Sigmoid colon (tissue), 7 donors: ENCODE measurements at regions of chr5 and their contacts with region 1.

Region 1: GRCh38 chr5:179907570-179908324 is at the start of gene TBC1D9B:
- DNase-seq: peak; percentile 88
- H3K4me3 ChIP-seq: peak within 1 kb of the TSS; percentile 52 to 72 (median 66)
- H3K27ac ChIP-seq: peak within 1 kb of the TSS; percentile 78 to 85 (median 80)
- H3K4me1 ChIP-seq: peaks cover 0 to 21% (median 19%) of the 10 kb centered on the region in 4 donors
- H3K27me3 ChIP-seq: no peaks in the 10 kb centered on the region
- CTCF ChIP-seq: no peak
- EP300 ChIP-seq: no peak
- POLR2A ChIP-seq: no peak
- total RNA-seq, gene TBC1D9B: 291 to 1,545 (median 1,005) TPM

Region 2: GRCh38 chr5:179763215-179763945 is 144.4 kb before region 1 on chr5:
- intact Hi-C with region 1: loop called (anchors 5 kb)
- DNase-seq: peak; percentile 82
- H3K4me3 ChIP-seq: no peak overlapping the region
- H3K27ac ChIP-seq: peak overlapping the region; percentile 52 to 78 (median 61)
- H3K4me1 ChIP-seq: peaks cover 0 to 82% (median 68%) of the 10 kb centered on the region in 4 donors
- H3K27me3 ChIP-seq: no peaks in the 10 kb centered on the region
- CTCF ChIP-seq: peak; percentile 69 to 86 (median 80)
- EP300 ChIP-seq: no peak
- POLR2A ChIP-seq: no peak

Region 3: GRCh38 chr5:179806250-179807222 is 101.2 kb before region 1 on chr5 and contains the start of gene MGAT4B:
- intact Hi-C with region 1: loop called (anchors 5 kb)
- DNase-seq: peak; percentile 86
- H3K4me3 ChIP-seq: peak within 1 kb of the TSS; percentile 84 to 98 (median 90)
- H3K27ac ChIP-seq: peak within 1 kb of the TSS; percentile 95 to 99 (median 98)
- H3K4me1 ChIP-seq: peaks cover 0 to 52% (median 48%) of the 10 kb centered on the region in 4 donors
- H3K27me3 ChIP-seq: no peaks in the 10 kb centered on the region
- CTCF ChIP-seq: no peak
- EP300 ChIP-seq: no peak
- POLR2A ChIP-seq: no peak
- total RNA-seq, gene MGAT4B: 27.8 to 56.8 (median 31.5) TPM

Region 4: GRCh38 chr5:179858586-179859427 is 48.9 kb before region 1 on chr5 and contains the start of gene MRNIP:
- intact Hi-C with region 1: loop called (anchors 5 kb)
- DNase-seq: peak; percentile 98
- H3K4me3 ChIP-seq: peak within 1 kb of the TSS; percentile 90 to 99 (median 94)
- H3K27ac ChIP-seq: peak within 1 kb of the TSS; percentile 90 to 95 (median 93)
- H3K4me1 ChIP-seq: peaks cover 0 to 25% (median 21%) of the 10 kb centered on the region in 4 donors
- H3K27me3 ChIP-seq: no peaks in the 10 kb centered on the region
- CTCF ChIP-seq: peak in 1 of 4 experiments; percentile 11
- EP300 ChIP-seq: no peak
- POLR2A ChIP-seq: peak; percentile 45 to 52
- total RNA-seq, gene MRNIP: 30.7 to 59.8 (median 34.5) TPM

Region 5: DNA sequence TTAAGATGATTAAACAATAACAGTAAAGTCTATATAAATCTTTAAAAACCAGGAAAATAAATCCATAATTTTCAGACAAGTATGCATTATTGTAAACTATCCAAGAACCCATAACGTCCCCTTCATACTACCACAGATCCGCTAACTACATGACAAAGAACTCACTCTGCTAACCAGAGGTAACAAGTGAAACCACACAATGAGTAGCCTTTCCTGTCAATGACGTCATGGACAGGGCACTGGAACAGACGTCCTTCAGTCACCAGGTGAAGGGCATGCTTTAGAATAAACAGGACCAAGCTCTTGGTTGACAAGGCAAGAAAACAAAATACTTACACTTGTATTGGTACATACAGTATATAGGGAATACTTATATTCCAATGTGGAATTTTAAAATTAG is 118.6 kb after region 1 on chr5:
- intact Hi-C with region 1: no loop called
- DNase-seq: no peak
- H3K4me3 ChIP-seq: no peak overlapping the region
- H3K27ac ChIP-seq: no peak overlapping the region
- H3K4me1 ChIP-seq: peaks cover 0 to 18% (median 8%) of the 10 kb centered on the region in 4 donors
- H3K27me3 ChIP-seq: no peaks in the 10 kb centered on the region
- CTCF ChIP-seq: no peak
- EP300 ChIP-seq: no peak
- POLR2A ChIP-seq: no peak

Region 6: GRCh38 chr5:180071531-180072255 is 163.9 kb after region 1 on chr5 and contains the start of gene RNF130:
- intact Hi-C with region 1: loop called (anchors 5 kb)
- DNase-seq: peak; percentile 97
- H3K4me3 ChIP-seq: peak within 1 kb of the TSS; percentile 88 to 96 (median 92)
- H3K27ac ChIP-seq: peak within 1 kb of the TSS; percentile 96 to 99 (median 98)
- H3K4me1 ChIP-seq: peaks cover 0 to 42% (median 27%) of the 10 kb centered on the region in 4 donors
- H3K27me3 ChIP-seq: no peaks in the 10 kb centered on the region
- CTCF ChIP-seq: no peak
- EP300 ChIP-seq: peak in 1 of 4 donors; percentile 19
- POLR2A ChIP-seq: peak in 1 of 2 donors; percentile 33
- total RNA-seq, gene RNF130: 64.1 to 144 (median 117) TPM

Region 7: GRCh38 chr5:180090098-180090768 is 182.5 kb after region 1 on chr5:
- intact Hi-C with region 1: loop called (anchors 1 kb)
- DNase-seq: peak; percentile 84
- H3K4me3 ChIP-seq: peak overlapping the region; percentile 51 to 69 (median 58)
- H3K27ac ChIP-seq: peak overlapping the region; percentile 76 to 82 (median 80)
- H3K4me1 ChIP-seq: peaks cover 0 to 9% (median 7%) of the 10 kb centered on the region in 4 donors
- H3K27me3 ChIP-seq: no peaks in the 10 kb centered on the region
- CTCF ChIP-seq: peak; percentile 63 to 89 (median 66)
- EP300 ChIP-seq: no peak
- POLR2A ChIP-seq: no peak